ENCODE measurements at regions of chr2 and their contacts with region 1.

Region 1: DNA sequence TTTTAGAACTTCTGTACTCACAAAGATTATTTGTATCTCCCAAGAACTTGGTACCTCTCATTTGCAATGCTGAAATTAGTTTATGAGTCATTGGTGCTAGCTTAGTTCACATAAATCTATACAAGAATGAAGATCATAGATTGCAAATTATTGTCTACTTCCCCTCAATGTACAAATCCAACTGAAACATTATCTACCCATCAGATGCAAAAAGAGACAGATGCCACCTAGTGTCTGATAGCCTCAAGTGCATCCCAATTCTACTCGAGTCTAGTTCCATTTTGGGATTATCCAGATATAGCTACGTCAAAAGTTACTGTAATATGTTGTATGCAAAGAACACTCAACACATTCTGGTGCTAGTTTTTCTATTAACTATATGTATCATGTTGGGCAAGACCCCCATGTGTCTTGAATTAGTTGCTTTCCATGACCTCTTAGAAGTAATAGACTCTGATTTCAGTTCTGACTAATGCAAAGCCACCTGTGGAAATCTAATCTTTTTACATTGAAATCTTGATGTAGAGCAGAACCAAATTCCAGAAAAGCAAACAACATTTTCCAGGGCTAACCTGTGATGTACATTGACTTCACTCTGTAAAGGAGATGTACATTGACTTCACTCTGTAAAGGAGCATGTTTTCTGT is 210.0 kb downstream of the RBM43 start:
- DNase-seq: no peak
- ATAC-seq: peak; percentile 86
- H3K4me3 ChIP-seq: no peak overlapping the region
- H3K27ac ChIP-seq: no peak overlapping the region
- H3K4me1 ChIP-seq: no peaks in the 10 kb centered on the region
- H3K27me3 ChIP-seq: no peaks in the 10 kb centered on the region
- CTCF ChIP-seq: peak; percentile 67 to 81 (median 79)
- EP300 ChIP-seq: no peak
- POLR2A ChIP-seq: no peak
- RAD21 ChIP-seq: peak; percentile 72

Region 2: DNA sequence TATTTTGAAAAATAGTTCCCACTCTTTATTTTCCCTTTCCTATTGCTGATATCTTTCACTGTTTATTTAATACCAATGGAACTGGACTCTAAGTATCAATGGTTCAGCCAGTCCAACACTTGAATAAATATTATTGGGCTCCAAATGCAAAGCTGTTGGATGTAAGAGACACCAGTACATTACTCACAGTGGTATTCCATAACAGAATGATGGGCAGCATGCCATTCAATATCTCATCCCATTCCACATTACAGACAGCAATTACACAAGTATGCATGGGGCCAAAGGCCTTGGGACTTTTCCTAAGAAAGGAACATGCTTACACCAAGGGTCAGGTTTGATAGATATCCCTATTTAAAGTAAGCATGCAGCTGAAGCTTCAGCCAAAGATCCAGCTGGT is 796.2 kb before region 1 on chr2:
- CTCF ChIA-PET with region 1: no interaction called
- POLR2A ChIA-PET with region 1: no interaction called
- RAD21 ChIA-PET with region 1: no interaction called
- SMC1A ChIA-PET with region 1: no interaction called
- in situ Hi-C with region 1: no loop called
- intact Hi-C with region 1: loop called (anchors 5 kb)
- DNase-seq: no peak
- ATAC-seq: no peak
- H3K4me3 ChIP-seq: no peak overlapping the region
- H3K27ac ChIP-seq: no peak overlapping the region
- H3K4me1 ChIP-seq: no peaks in the 10 kb centered on the region
- H3K27me3 ChIP-seq: no peaks in the 10 kb centered on the region
- CTCF ChIP-seq: no peak
- EP300 ChIP-seq: no peak
- POLR2A ChIP-seq: no peak
- RAD21 ChIP-seq: no peak

Region 3: DNA sequence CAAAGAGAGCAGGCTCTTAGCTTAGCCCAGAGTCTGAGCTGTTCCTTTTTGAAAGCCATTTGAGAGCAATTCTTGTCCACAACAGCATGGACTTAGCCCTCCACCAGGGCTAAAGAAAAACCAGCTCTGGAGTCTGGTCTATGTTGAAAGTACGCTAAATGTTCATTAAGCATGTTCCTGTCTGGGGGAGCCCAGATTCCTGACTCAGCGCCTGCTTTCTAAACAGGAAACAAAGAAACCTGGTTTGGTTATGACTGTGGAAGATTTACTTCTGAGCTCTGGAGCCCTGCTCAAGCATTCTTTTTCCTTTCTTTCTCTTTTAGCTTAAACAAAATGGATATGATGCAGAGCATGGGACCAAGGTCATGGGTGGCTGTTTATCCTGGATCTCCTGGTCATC is 69.9 kb before region 1 on chr2:
- CTCF ChIA-PET with region 1: no interaction called
- POLR2A ChIA-PET with region 1: no interaction called
- RAD21 ChIA-PET with region 1: no interaction called
- SMC1A ChIA-PET with region 1: no interaction called
- in situ Hi-C with region 1: no loop called
- intact Hi-C with region 1: no loop called
- DNase-seq: no peak
- ATAC-seq: no peak
- H3K4me3 ChIP-seq: no peak overlapping the region
- H3K27ac ChIP-seq: no peak overlapping the region
- H3K4me1 ChIP-seq: no peaks in the 10 kb centered on the region
- H3K27me3 ChIP-seq: no peaks in the 10 kb centered on the region
- CTCF ChIP-seq: no peak
- EP300 ChIP-seq: no peak
- POLR2A ChIP-seq: no peak
- RAD21 ChIP-seq: no peak

Region 4: DNA sequence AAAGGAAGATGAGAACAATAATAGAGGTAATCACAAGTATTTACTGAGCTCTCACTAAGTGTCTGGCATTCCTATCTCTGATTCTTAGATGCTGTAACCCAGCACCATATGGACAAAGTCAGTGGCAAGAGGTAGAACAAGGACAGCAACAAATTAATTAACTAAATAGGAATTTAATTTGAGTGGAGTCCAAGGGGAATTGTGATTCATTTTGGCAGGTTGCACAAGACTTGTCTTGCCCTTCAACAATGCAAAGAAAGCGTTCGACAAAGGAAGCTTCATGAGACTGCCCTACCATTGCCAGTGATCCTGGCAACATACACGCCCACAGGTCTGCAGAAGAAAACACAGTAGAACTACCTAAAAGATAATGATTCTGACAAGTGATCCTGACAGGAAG is 11.7 kb before region 1 on chr2:
- CTCF ChIA-PET with region 1: interaction called, 10 read pairs
- POLR2A ChIA-PET with region 1: no interaction called
- RAD21 ChIA-PET with region 1: no interaction called
- SMC1A ChIA-PET with region 1: no interaction called
- in situ Hi-C with region 1: no loop called
- intact Hi-C with region 1: no loop called
- DNase-seq: no peak
- ATAC-seq: no peak
- H3K4me3 ChIP-seq: no peak overlapping the region
- H3K27ac ChIP-seq: no peak overlapping the region
- H3K4me1 ChIP-seq: no peaks in the 10 kb centered on the region
- H3K27me3 ChIP-seq: 0 out of 4 replicates have a peak, but pooled peaks cover 0 to 1% of the 10 kb centered on the region in 2 experiments
- CTCF ChIP-seq: no peak
- EP300 ChIP-seq: no peak
- POLR2A ChIP-seq: no peak
- RAD21 ChIP-seq: no peak

Region 5: GRCh38 chr2:151138507-151138906 is 86.8 kb after region 1 on chr2:
- CTCF ChIA-PET with region 1: no interaction called
- POLR2A ChIA-PET with region 1: no interaction called
- RAD21 ChIA-PET with region 1: no interaction called
- SMC1A ChIA-PET with region 1: no interaction called
- in situ Hi-C with region 1: no loop called
- intact Hi-C with region 1: no loop called
- DNase-seq: no peak
- ATAC-seq: no peak
- H3K4me3 ChIP-seq: no peak overlapping the region
- H3K27ac ChIP-seq: no peak overlapping the region
- H3K4me1 ChIP-seq: no peaks in the 10 kb centered on the region
- H3K27me3 ChIP-seq: no peaks in the 10 kb centered on the region
- CTCF ChIP-seq: no peak
- EP300 ChIP-seq: no peak
- POLR2A ChIP-seq: no peak
- RAD21 ChIP-seq: no peak